ENCODE measurements at regions of chr11 and their contacts with region 1.

Region 1: DNA sequence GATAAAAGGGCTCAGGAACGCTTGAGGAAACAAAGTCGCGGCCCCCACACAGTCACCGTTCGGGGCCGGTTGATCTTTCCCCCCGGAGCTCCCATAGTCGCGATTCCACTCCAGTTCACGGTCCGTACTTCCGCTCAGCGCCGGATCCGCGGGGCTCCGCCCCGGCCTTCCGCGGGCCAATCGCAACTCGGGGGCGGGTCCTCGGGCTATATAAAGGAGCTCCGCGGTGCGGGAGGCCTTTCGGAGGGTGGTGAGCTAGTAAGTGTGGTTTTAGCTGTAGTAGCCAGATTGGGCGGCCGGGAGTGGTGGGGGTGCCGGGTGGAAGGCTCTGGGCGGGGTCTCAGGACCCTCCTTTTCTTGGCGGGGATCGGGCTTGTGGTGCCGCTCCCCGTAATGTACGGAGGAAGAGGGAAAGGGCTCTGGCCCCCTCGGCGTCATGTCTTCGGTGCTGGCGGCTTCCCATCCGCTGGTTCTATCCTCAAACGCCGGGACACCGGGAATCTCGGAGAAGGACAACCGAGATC is at the starts of genes C11orf98 and CSKMT:
- DNase-seq: peak; percentile 92 to 97 (median 94)
- ATAC-seq: peak; percentile 91
- H3K4me3 ChIP-seq: peak within 1 kb of the TSS; percentile 73
- H3K4me3 Mint-ChIP-seq: peak within 1 kb of the TSS; percentile 99
- H3K27ac ChIP-seq: peak within 1 kb of the TSS; percentile 80 to 88
- H3K27ac Mint-ChIP-seq: peak within 1 kb of the TSS; percentile 96
- H3K4me1 ChIP-seq: peaks cover 48% of the 10 kb centered on the region
- H3K4me1 Mint-ChIP-seq: peaks cover 36% of the 10 kb centered on the region
- H3K27me3 ChIP-seq: no peaks in the 10 kb centered on the region
- H3K27me3 Mint-ChIP-seq: no peaks in the 10 kb centered on the region
- CTCF ChIP-seq: no peak
- total RNA-seq, gene C11orf98: 14.3 to 18.5 TPM
- total RNA-seq, gene CSKMT: 17.8 to 18.8 TPM

Region 2: GRCh38 chr11:62601394-62602140 is 63.6 kb before region 1 on chr11 and contains the start of gene MTA2:
- CTCF ChIA-PET with region 1: no interaction called
- POLR2A ChIA-PET with region 1: interaction called, 77 read pairs
- intact Hi-C with region 1: no loop called
- DNase-seq: peak; percentile 98 to 100 (median 99)
- ATAC-seq: peak; percentile 79
- H3K4me3 ChIP-seq: peak within 1 kb of the TSS; percentile 100
- H3K4me3 Mint-ChIP-seq: peak within 1 kb of the TSS; percentile 94
- H3K27ac ChIP-seq: peak within 1 kb of the TSS; percentile 85 to 94
- H3K27ac Mint-ChIP-seq: peak within 1 kb of the TSS; percentile 93
- H3K4me1 ChIP-seq: peaks cover 46% of the 10 kb centered on the region
- H3K4me1 Mint-ChIP-seq: peaks cover 56% of the 10 kb centered on the region
- H3K27me3 ChIP-seq: no peaks in the 10 kb centered on the region
- H3K27me3 Mint-ChIP-seq: no peaks in the 10 kb centered on the region
- CTCF ChIP-seq: no peak
- total RNA-seq, gene MTA2: 167 to 172 TPM

Region 3: GRCh38 chr11:62632492-62632891 is 32.6 kb before region 1 on chr11:
- CTCF ChIA-PET with region 1: no interaction called
- POLR2A ChIA-PET with region 1: interaction called, 21 read pairs
- intact Hi-C with region 1: no loop called
- DNase-seq: no peak
- ATAC-seq: no peak
- H3K4me3 ChIP-seq: no peak overlapping the region
- H3K4me3 Mint-ChIP-seq: no peak overlapping the region
- H3K27ac ChIP-seq: no peak overlapping the region
- H3K27ac Mint-ChIP-seq: peak overlapping the region; percentile 30
- H3K4me1 ChIP-seq: peaks cover 27% of the 10 kb centered on the region
- H3K4me1 Mint-ChIP-seq: peaks cover 19% of the 10 kb centered on the region
- H3K27me3 ChIP-seq: no peaks in the 10 kb centered on the region
- H3K27me3 Mint-ChIP-seq: no peaks in the 10 kb centered on the region
- CTCF ChIP-seq: no peak

Region 4: DNA sequence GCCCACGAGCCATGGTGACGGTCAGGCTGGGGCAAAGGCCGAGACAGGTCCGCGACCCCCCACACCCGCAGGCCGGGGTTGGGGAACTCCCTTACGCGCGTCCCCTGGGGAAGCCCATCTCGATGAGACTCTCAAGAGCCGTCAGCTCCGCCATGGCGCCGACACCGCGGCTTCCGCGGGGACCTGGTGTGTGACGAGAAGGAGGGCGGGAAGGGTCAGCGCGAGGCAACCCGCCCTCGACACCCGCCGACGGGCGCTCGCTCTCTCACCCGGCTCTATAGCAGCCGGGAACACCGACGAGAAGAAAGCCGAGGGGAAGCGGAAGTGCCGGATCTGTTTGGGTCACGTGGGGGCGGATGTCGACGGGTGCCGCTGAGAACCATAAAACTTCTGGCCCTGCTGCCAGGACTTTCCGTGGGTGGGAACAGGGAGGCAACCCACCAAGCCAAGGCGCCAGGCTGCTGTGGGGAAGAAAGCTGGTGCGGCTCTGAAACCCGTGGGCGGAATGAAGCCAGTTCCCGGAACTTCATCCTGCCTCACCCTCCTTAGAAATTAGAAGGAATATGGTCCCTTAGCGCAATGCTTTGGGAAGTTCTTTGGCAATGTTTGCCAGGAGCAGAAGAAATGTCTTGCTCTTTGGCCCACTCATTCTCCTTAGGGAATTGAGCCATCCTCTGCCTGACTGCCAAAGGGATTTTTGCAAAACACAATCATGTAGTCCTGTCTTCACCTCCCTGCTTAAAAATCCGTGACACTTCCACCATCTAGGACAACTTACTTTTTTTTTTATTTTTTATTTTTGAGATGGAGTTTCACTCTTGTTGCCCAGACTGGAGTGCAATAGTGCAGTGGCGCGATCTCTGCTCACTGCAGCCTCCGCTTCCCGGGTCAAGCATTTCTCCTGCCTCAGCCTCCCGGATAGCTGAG is 13.9 kb after region 1 on chr11 and contains the start of gene UBXN1:
- CTCF ChIA-PET with region 1: interaction called, 7 read pairs
- POLR2A ChIA-PET with region 1: interaction called, 43 read pairs
- intact Hi-C with region 1: no loop called
- DNase-seq: peak; percentile 68 to 93 (median 76)
- ATAC-seq: peak; percentile 84
- H3K4me3 ChIP-seq: peak within 1 kb of the TSS; percentile 100
- H3K4me3 Mint-ChIP-seq: peak within 1 kb of the TSS; percentile 91
- H3K27ac ChIP-seq: peak within 1 kb of the TSS; percentile 97
- H3K27ac Mint-ChIP-seq: peak within 1 kb of the TSS; percentile 87
- H3K4me1 ChIP-seq: peaks cover 33% of the 10 kb centered on the region
- H3K4me1 Mint-ChIP-seq: peaks cover 46% of the 10 kb centered on the region
- H3K27me3 ChIP-seq: no peaks in the 10 kb centered on the region
- H3K27me3 Mint-ChIP-seq: no peaks in the 10 kb centered on the region
- CTCF ChIP-seq: no peak
- total RNA-seq, gene UBXN1: 196 to 222 TPM

Region 5: GRCh38 chr11:62787005-62787759 is 122.0 kb after region 1 on chr11 and contains the start of gene TMEM179B:
- CTCF ChIA-PET with region 1: interaction called, 4 read pairs
- POLR2A ChIA-PET with region 1: interaction called, 19 read pairs
- intact Hi-C with region 1: no loop called
- DNase-seq: peak; percentile 90 to 99 (median 97)
- ATAC-seq: peak; percentile 61
- H3K4me3 ChIP-seq: peak within 1 kb of the TSS; percentile 77
- H3K4me3 Mint-ChIP-seq: peak within 1 kb of the TSS; percentile 98
- H3K27ac ChIP-seq: peak within 1 kb of the TSS; percentile 80 to 92
- H3K27ac Mint-ChIP-seq: peak within 1 kb of the TSS; percentile 98
- H3K4me1 ChIP-seq: peaks cover 53% of the 10 kb centered on the region
- H3K4me1 Mint-ChIP-seq: peaks cover 55% of the 10 kb centered on the region
- H3K27me3 ChIP-seq: no peaks in the 10 kb centered on the region
- H3K27me3 Mint-ChIP-seq: no peaks in the 10 kb centered on the region
- CTCF ChIP-seq: no peak
- total RNA-seq, gene TMEM179B: 34.7 to 37.4 TPM